Mammary epithelial cell (primary cell): ENCODE measurements at regions of chr2 and their contacts with region 1.

Region 1: GRCh38 chr2:65728477-65729190 is 296.2 kb upstream of the SPRED2 start:
- DNase-seq: peak; percentile 66
- H3K4me3 ChIP-seq: no peak overlapping the region
- H3K27ac ChIP-seq: no peak overlapping the region
- H3K4me1 ChIP-seq: peaks cover 6% of the 10 kb centered on the region
- H3K27me3 ChIP-seq: no peaks in the 10 kb centered on the region
- CTCF ChIP-seq: no peak

Region 2: GRCh38 chr2:65056215-65057053 is 672.2 kb before region 1 on chr2 and contains the start of gene CEP68:
- CTCF ChIA-PET with region 1: no interaction called
- dilution Hi-C with region 1: no loop called
- in situ Hi-C with region 1: no loop called
- intact Hi-C with region 1: no loop called
- DNase-seq: peak; percentile 96
- H3K4me3 ChIP-seq: peak within 1 kb of the TSS; percentile 57 to 68 (median 65)
- H3K27ac ChIP-seq: peak within 1 kb of the TSS; percentile 26
- H3K4me1 ChIP-seq: peaks cover 12% of the 10 kb centered on the region
- H3K27me3 ChIP-seq: no peaks in the 10 kb centered on the region
- CTCF ChIP-seq: no peak
- total RNA-seq, gene CEP68: 9.0 to 9.3 TPM

Region 3: GRCh38 chr2:65767946-65768345 is 39.3 kb after region 1 on chr2:
- CTCF ChIA-PET with region 1: no interaction called
- dilution Hi-C with region 1: no loop called
- in situ Hi-C with region 1: no loop called
- intact Hi-C with region 1: no loop called
- DNase-seq: no peak
- H3K4me3 ChIP-seq: no peak overlapping the region
- H3K27ac ChIP-seq: no peak overlapping the region
- H3K4me1 ChIP-seq: no peaks in the 10 kb centered on the region
- H3K27me3 ChIP-seq: no peaks in the 10 kb centered on the region
- CTCF ChIP-seq: no peak

Region 4: DNA sequence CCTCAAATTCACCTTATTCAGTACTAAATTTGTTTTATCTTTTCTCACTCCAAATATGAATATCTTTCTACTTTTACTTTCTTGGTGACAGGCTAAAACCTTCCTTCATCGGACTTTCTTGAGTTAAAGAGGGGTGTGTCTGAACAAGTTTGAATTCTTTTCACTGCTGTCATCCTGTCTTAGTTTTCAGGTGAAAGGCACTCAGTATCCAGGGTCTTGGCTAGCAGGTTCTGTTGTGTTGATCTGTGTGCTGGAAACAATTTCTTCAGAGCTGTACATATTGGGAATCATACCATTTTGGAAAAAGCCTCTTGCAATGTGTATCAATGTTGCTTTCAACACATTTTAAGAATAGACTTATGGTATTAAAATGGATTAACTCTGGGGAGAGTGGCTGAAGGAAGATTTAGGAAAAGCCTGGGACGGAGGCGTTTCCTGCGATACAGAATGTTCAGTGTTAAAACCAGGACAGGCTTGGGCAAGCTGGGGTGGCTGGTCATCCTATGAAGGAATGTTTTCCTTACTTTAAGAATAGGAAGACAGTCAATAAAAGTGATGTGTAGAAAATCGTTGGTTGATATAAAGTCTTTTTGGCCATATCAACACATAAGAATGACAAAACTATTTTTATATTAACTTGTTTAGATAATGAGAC is 54.5 kb after region 1 on chr2:
- CTCF ChIA-PET with region 1: no interaction called
- dilution Hi-C with region 1: no loop called
- in situ Hi-C with region 1: no loop called
- intact Hi-C with region 1: loop called (anchors 5 kb)
- DNase-seq: peak; percentile 63
- H3K4me3 ChIP-seq: peak overlapping the region in 2 of 3 experiments; percentile 12 to 22
- H3K27ac ChIP-seq: peak overlapping the region; percentile 79
- H3K4me1 ChIP-seq: peaks cover 5% of the 10 kb centered on the region
- H3K27me3 ChIP-seq: no peaks in the 10 kb centered on the region
- CTCF ChIP-seq: no peak

Region 5: DNA sequence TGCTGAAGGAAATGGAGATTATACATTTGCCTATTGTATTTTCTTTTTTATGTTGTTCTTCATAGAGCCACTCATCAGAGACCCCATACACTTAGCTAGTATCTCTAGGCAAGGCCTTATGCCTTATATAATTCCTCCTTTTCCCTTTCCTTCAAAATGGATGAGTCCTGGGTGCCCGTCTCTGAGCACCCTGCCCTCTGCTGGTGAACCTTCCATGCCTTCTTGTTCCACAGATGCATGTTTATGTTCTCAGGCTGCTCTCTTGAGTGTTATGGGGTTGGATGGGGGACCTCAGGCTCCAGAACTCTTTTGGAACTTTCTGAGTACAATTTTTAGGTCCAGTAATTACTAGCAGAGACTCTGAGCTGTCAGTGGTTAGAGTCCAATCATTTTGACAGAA is 72.4 kb after region 1 on chr2:
- CTCF ChIA-PET with region 1: no interaction called
- dilution Hi-C with region 1: no loop called
- in situ Hi-C with region 1: no loop called
- intact Hi-C with region 1: no loop called
- DNase-seq: peak; percentile 20
- H3K4me3 ChIP-seq: no peak overlapping the region
- H3K27ac ChIP-seq: no peak overlapping the region
- H3K4me1 ChIP-seq: no peaks in the 10 kb centered on the region
- H3K27me3 ChIP-seq: no peaks in the 10 kb centered on the region
- CTCF ChIP-seq: peak; percentile 42 to 64

Region 6: GRCh38 chr2:65880436-65881163 is 152.0 kb after region 1 on chr2:
- CTCF ChIA-PET with region 1: no interaction called
- dilution Hi-C with region 1: no loop called
- in situ Hi-C with region 1: no loop called
- intact Hi-C with region 1: no loop called
- DNase-seq: no peak
- H3K4me3 ChIP-seq: no peak overlapping the region
- H3K27ac ChIP-seq: no peak overlapping the region
- H3K4me1 ChIP-seq: no peaks in the 10 kb centered on the region
- H3K27me3 ChIP-seq: no peaks in the 10 kb centered on the region
- CTCF ChIP-seq: no peak